Activated CD4-positive, alpha-beta T cell treated with anti-CD3 and anti-CD28 coated beads for 36 hours (primary cell): ENCODE measurements at regions of chr12 and their contacts with region 1.

Region 1: GRCh38 chr12:12171991-12172521 is 94.8 kb downstream of the LRP6 start:
- DNase-seq: peak; percentile 60
- ATAC-seq: peak; percentile 91
- H3K4me3 Mint-ChIP-seq: no peak overlapping the region
- H3K27ac Mint-ChIP-seq: no peak overlapping the region
- H3K4me1 Mint-ChIP-seq: peaks cover 14% of the 10 kb centered on the region
- H3K27me3 Mint-ChIP-seq: no peaks in the 10 kb centered on the region

Region 2: DNA sequence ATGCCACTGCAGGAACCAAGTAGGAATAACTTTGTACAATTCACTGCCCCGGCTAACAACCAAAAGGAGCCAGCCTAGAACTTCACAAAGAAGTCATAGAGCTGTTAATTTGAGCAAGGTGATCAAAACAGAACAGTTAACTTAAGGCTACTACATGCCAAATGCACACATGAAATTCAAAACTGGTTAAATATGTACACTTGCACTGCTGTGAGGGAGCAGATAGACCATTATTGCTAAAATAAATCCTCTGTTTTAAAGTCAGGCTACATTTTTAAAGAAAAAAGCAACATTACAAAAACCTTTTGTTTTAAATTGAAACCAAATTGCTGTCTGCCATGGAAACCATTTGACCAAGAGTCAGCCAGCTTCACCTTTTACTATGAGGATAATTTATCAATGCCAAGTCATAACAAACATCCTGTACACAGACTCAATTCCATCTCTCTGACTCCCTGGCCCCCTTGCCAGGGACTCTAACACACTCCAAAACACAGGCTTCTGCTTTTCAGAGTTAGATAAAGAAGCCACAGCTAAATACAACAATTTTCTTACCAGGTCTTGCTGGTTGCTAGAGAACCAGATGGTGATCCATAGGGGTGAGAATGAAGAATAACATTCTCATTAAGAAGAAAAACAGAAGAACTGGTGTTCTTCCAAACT is 10.8 kb after region 1 on chr12:
- CTCF ChIA-PET with region 1: interaction called, 12 read pairs
- POLR2A ChIA-PET with region 1: no interaction called
- intact Hi-C with region 1: no loop called
- DNase-seq: no peak
- ATAC-seq: no peak
- H3K4me3 Mint-ChIP-seq: no peak overlapping the region
- H3K27ac Mint-ChIP-seq: no peak overlapping the region
- H3K4me1 Mint-ChIP-seq: no peaks in the 10 kb centered on the region
- H3K27me3 Mint-ChIP-seq: no peaks in the 10 kb centered on the region